Common myeloid progenitor, CD34-positive (primary cell): ENCODE measurements at regions of chr3 and their contacts with region 1.

Region 1: GRCh38 chr3:141360888-141361598 is 7.3 kb upstream of the ZBTB38 start:
- DNase-seq: peak; percentile 51 to 66 (median 61)
- H3K4me3 ChIP-seq: peak overlapping the region in 3 of 7 experiments; percentile 3 to 63 (median 16)
- H3K27ac ChIP-seq: no peak overlapping the region
- H3K4me1 ChIP-seq: no peaks in the 10 kb centered on the region
- H3K27me3 ChIP-seq: no peaks in the 10 kb centered on the region

Region 2: GRCh38 chr3:141114816-141115460 is 246.1 kb before region 1 on chr3:
- CTCF ChIA-PET with region 1: no interaction called
- POLR2A ChIA-PET with region 1: no interaction called
- DNase-seq: no peak
- H3K4me3 ChIP-seq: no peak overlapping the region
- H3K27ac ChIP-seq: no peak overlapping the region
- H3K4me1 ChIP-seq: peaks cover 0 to 6% (median 2%) of the 10 kb centered on the region in 4 experiments
- H3K27me3 ChIP-seq: no peaks in the 10 kb centered on the region

Region 3: DNA sequence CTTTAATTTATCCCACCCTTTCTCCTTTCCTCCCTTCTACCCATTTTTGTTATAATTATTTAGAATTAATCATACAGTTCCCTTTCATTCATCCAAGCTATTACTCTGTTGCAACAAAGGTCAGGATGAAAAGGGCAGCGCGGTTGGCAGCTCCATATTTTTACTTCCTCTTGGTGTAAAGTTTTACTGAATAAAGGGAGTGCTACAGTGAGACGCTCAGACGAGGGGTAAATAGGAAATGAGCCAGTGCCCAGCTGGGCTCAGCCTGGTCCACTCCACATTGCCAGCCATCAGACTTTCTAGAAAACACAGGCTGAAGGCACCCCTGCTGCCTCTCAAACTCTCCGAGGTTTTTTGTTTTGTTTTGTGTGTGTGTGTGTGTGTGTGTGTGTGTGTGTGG is 14.6 kb before region 1 on chr3:
- CTCF ChIA-PET with region 1: interaction called, 10 read pairs
- POLR2A ChIA-PET with region 1: no interaction called
- DNase-seq: no peak
- H3K4me3 ChIP-seq: no peak overlapping the region
- H3K27ac ChIP-seq: no peak overlapping the region
- H3K4me1 ChIP-seq: no peaks in the 10 kb centered on the region
- H3K27me3 ChIP-seq: no peaks in the 10 kb centered on the region

Region 4: GRCh38 chr3:141402476-141403171 is 41.6 kb after region 1 on chr3:
- CTCF ChIA-PET with region 1: interaction called, 10 read pairs
- POLR2A ChIA-PET with region 1: no interaction called
- DNase-seq: peak; percentile 34 to 83 (median 75)
- H3K4me3 ChIP-seq: peak overlapping the region; percentile 66 to 97 (median 79)
- H3K27ac ChIP-seq: peak overlapping the region; percentile 69 to 85
- H3K4me1 ChIP-seq: peaks cover 5 to 21% (median 11%) of the 10 kb centered on the region in 4 experiments
- H3K27me3 ChIP-seq: no peaks in the 10 kb centered on the region

Region 5: GRCh38 chr3:141441381-141442364 is 80.6 kb after region 1 on chr3:
- CTCF ChIA-PET with region 1: interaction called, 51 read pairs
- POLR2A ChIA-PET with region 1: interaction called, 3 read pairs
- DNase-seq: peak; percentile 79 to 89 (median 88)
- H3K4me3 ChIP-seq: peak overlapping the region in 1 of 7 experiments; percentile 35
- H3K27ac ChIP-seq: peak overlapping the region in 1 of 2 experiments; percentile 62
- H3K4me1 ChIP-seq: peaks cover 0 to 4% (median 2%) of the 10 kb centered on the region in 4 experiments
- H3K27me3 ChIP-seq: no peaks in the 10 kb centered on the region

Region 6: DNA sequence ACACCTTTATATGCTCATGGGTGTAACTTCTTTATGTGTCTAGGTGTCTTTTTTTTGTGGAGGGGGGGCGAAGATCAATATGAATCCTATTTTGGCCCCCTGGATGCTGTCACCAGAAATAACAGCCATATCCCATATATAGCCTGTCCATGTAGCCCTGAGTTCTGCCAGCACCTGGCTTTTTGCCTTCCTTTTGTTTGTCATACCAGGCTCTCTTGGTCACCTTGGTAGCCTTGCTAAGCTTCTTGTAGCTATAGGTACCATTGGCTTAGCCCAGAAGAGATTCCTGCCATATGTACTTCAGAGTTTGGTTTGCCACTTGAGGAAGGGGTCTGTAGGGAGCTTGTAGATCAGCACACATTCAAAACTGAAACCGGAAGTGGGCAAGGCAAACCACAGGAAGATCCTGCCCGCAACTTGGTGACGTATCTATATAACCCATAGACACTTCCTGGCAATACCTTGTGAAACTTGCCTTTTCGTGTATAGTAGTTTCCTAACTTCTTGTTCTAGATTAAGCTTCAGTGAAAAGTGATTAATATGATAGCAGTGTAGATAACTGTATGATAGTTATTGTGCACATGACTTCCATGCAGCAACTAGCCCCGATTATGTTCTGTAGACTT is 137.7 kb after region 1 on chr3:
- CTCF ChIA-PET with region 1: no interaction called
- POLR2A ChIA-PET with region 1: no interaction called
- DNase-seq: peak; percentile 99 to 100 (median 99)
- H3K4me3 ChIP-seq: peak overlapping the region in 6 of 7 experiments; percentile 46 to 76 (median 50)
- H3K27ac ChIP-seq: peak overlapping the region; percentile 82 to 87
- H3K4me1 ChIP-seq: peaks cover 18 to 33% (median 25%) of the 10 kb centered on the region in 4 experiments
- H3K27me3 ChIP-seq: no peaks in the 10 kb centered on the region